ENCODE measurements at regions of chr2 and their contacts with region 1.

Region 1: DNA sequence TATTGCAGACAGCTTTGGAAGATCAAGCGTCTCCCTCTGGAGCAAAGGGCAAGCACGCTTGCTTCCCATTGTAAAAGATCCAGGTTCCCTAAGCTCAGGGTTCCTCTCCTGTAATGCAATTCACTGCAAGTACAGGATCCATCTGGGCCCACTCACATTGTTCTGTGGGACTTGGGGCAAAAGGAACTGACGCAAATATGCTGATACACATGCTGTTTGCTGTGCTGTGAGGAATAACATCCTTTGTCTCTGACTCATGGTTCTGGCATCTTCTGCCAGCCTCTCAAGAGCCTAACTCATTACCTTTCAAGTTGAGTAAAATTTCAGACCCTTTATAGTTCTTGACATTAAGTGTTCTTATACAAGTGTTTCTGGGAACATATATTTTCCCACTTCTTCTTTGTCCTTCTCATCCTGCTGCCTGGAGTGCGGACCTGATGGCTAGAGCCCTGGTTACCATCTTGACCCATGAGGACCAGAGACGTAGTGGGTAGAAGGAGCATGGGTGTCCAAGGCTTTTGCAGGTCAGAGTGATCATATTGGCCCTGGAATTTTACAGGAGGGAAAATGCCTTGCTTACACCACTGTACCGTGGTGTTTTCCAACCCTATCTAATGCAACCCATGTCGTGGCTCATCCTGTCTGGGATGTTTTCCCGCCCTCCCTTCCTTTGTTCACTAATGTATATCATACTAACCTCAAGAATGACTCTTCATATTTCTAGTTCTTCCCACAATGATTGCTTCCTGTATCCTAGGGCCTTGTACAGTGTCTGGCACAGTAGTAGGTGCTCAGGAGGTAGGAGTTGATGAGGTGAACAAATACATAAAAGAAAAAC is 145.7 kb upstream of the GLI2 start:
- DNase-seq: peak; percentile 89
- H3K4me3 ChIP-seq: no peak overlapping the region
- H3K27ac ChIP-seq: peak overlapping the region; percentile 85
- H3K27me3 ChIP-seq: peaks cover 16% of the 10 kb centered on the region
- CTCF ChIP-seq: no peak

Region 2: DNA sequence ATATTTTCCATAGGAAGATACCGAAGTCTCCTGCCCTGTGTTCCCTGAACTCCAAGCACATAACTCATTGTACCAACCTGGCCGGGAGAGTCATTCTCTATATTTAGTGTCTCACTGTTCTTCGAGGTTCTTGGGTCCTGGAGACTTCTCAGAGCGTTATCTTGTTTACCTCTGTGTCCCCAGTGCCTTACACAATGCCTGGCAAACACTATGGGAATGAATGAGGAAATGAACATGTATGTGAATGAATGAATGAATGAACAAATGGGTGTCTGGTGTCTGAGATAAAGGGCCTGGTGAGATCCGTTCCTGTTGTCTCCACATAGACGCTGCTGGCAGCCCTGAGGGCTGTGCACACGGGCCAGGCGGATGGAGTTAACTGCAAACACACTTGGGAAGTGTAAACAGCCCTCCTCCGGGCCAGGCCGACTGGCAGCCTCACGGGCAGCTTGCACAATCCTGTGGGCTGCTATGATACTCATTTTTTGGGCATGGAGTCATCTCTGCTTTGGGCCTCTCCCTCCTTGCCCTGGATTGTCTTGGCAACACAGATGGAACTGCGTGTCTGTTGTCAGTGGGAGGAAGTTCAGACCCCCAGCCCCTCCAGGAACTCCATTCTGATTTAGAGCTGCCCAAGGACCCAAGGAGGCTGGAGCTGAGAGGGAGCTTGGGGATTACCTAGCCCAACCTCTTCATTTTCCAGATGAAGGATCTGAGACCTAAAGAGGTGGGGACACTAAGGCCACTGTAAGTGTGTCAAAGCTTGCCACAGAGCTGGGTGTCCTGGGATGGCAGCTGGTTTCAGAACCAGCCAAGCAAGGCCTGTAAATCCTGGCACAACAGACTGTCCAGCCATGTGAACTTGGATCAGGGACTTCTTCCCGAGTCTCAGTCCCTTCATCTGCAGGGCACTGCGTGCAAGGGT is 119.7 kb before region 1 on chr2:
- CTCF ChIA-PET with region 1: no interaction called
- POLR2A ChIA-PET with region 1: interaction called, 11 read pairs
- DNase-seq: peak; percentile 90
- H3K4me3 ChIP-seq: no peak overlapping the region
- H3K27ac ChIP-seq: peak overlapping the region; percentile 96
- H3K27me3 ChIP-seq: no peaks in the 10 kb centered on the region
- CTCF ChIP-seq: no peak

Region 3: DNA sequence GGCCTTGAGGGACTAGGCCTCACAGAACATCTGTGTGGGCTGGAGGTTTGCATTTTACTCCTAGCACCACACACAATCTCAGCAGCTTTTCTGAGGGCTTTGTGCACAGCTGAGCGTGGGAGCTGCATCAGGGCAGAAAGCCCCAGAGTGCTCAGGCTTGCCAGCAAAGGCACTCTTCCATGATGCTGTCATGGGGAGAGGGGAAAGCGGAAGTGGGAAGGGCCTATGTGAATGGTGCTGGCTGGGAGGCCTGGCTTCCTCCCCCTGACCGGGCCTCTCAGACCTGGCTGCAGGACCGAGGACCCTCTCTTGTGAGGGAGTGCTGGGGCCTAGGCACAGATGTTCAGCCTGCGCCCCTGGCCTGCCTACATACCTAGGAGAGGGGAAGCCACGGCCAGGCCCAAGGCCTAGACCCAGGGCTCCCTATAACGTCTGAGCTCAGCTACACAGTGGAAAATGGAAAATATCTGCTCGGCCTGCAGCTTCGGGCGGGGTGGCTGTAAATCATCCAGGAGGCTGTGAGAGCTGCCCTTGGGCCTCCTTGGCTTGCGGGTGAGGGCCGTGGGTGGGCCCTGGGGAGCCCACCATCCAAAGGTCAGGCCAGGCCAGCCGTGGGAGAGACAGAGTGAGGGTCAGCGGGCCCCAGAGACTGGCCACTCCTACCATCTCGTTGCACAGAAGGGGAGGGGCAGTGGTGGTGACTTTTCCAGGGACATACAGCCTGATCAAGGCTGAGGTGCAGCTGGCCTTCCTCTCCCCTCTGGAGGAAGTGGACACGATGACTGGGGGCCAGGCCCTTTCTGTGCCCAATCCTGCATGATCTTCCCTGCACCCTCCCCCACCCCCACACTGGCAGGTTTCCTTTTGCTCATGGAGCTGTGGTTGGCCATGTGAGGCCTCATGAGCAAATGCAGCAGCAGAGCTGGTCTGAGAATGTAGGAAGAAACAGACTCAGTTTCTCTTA is 168.5 kb after region 1 on chr2:
- CTCF ChIA-PET with region 1: no interaction called
- POLR2A ChIA-PET with region 1: no interaction called
- DNase-seq: peak; percentile 65
- H3K4me3 ChIP-seq: peak overlapping the region; percentile 8; the same call in 1 of the 2 replicates
- H3K27ac ChIP-seq: peak overlapping the region; percentile 97
- H3K27me3 ChIP-seq: no peaks in the 10 kb centered on the region
- CTCF ChIP-seq: no peak